MCF 10A (cell line): ENCODE measurements at regions of chr1 and their contacts with region 1.

Region 1: DNA sequence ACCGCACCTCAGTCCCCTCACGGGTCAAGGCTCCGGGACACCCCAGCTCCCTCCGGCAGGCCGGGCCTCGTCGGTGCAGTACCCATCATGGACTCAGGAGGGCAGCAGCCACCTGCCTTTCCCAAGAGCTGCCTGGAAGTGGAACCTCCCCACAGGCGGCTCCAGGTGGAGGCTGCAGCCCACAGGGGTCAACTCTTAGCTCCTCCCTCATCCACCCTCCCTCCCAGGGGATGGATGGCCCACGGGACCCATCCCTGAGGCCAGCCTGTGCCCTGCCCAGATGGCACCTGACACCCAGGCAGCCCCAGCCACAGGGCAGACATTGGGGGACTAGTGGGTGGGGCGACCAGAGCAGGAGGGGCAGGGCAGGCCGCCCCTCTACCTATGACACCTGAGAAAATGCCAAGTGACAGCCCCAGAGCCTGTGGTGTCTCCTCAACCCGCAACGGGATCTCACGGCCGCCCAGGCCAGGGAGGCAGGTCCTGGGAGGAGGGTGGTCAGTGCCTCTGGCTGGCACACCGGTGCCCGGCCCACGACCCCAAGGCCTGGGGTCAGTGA is 1.2 kb upstream of the ARHGEF16 start:
- DNase-seq: peak; percentile 78
- H3K4me3 Mint-ChIP-seq: peak overlapping the region; percentile 76
- H3K27ac Mint-ChIP-seq: no peak overlapping the region
- H3K4me1 Mint-ChIP-seq: no peaks in the 10 kb centered on the region
- H3K27me3 Mint-ChIP-seq: peaks cover 19% of the 10 kb centered on the region
- CTCF ChIP-seq: peak; percentile 97

Region 2: DNA sequence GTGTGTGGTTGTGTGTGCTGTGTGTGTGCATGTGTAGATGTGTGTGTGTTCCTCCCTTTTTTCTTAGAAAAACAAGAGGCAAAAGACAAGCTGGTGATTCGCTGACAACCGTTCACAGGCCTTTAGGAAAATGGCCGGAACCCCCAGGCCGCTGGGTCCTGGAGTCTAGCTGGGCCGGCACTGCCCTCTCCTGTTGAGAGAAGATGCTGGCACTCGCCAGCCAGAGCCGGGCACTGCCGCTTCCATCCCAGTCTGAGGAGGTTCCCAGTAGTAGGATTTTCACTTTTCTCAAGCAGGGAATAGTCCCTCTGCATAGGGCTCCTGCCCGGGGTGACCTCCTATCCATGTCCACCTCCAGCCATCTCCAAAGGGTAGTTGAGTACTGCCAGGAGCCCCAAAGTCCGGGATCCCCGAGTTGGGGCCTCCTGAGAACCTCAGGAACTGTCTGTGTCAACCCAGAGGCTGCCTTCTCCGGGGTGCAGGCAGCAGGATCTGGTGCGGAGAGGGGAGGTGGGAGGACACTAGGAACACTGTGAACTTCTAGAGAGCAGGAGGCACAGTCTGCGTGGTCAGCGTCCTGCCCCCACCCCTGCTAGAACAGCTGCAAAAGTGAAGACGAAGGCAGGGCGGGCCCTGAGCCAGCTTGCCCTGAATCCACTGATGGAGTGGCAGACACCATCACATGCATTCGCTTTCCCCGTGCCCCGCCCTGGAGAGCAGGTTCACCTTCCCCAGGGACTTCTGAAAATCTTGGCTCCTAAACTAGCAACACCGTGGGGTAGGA is 42.9 kb before region 1 on chr1:
- CTCF ChIA-PET with region 1: no interaction called
- POLR2A ChIA-PET with region 1: no interaction called
- intact Hi-C with region 1: no loop called
- DNase-seq: peak; percentile 56
- H3K4me3 Mint-ChIP-seq: no peak overlapping the region
- H3K27ac Mint-ChIP-seq: no peak overlapping the region
- H3K4me1 Mint-ChIP-seq: no peaks in the 10 kb centered on the region
- H3K27me3 Mint-ChIP-seq: peaks cover 23% of the 10 kb centered on the region
- CTCF ChIP-seq: peak; percentile 48

Region 3: DNA sequence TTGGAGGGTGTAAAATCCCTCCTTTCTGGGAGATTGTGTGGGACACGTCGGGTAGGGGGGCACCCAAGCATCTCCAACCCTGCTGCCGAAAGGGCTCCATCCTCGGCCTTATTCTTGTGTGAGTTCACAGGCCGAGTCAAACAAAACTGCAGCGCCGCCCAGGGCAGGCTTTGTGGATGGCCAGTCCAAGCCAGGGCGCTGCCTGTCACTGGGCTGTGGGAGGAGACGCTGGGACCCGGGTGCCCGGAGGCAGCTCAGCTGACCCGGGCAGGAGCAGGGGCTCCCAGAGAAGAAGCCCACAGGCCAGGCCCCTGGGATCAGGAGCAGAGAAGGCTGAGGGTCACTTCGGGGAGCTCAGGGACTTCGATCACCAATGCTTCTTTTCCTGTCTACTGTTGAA is 30.6 kb before region 1 on chr1:
- CTCF ChIA-PET with region 1: no interaction called
- POLR2A ChIA-PET with region 1: no interaction called
- intact Hi-C with region 1: no loop called
- DNase-seq: no peak
- H3K4me3 Mint-ChIP-seq: no peak overlapping the region
- H3K27ac Mint-ChIP-seq: no peak overlapping the region
- H3K4me1 Mint-ChIP-seq: no peaks in the 10 kb centered on the region
- H3K27me3 Mint-ChIP-seq: peaks cover 32% of the 10 kb centered on the region
- CTCF ChIP-seq: no peak

Region 4: DNA sequence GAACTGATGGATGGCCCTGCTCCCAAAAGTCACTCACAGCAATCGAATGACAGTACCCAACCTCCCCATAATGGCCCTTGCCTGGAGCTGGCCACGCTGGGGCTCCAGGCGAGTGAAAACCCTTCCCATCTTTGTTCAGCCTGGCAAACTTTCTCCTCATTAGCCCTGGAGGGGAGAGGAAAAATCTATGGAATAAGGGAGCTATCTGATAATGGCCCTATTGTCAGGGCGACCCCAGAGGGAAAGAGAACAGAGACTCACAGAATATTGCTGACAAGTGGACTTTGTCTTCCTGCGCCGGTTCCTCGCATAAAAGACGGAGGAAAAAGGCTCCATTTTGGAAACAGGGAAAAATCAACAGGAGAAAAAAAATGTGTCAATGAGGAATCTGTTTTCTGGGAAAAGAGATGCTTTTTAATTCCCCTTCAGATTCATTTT is 11.9 kb before region 1 on chr1:
- CTCF ChIA-PET with region 1: interaction called, 27 read pairs
- POLR2A ChIA-PET with region 1: no interaction called
- intact Hi-C with region 1: no loop called
- DNase-seq: no peak
- H3K4me3 Mint-ChIP-seq: no peak overlapping the region
- H3K27ac Mint-ChIP-seq: no peak overlapping the region
- H3K4me1 Mint-ChIP-seq: no peaks in the 10 kb centered on the region
- H3K27me3 Mint-ChIP-seq: peaks cover 40% of the 10 kb centered on the region
- CTCF ChIP-seq: no peak

Region 5: DNA sequence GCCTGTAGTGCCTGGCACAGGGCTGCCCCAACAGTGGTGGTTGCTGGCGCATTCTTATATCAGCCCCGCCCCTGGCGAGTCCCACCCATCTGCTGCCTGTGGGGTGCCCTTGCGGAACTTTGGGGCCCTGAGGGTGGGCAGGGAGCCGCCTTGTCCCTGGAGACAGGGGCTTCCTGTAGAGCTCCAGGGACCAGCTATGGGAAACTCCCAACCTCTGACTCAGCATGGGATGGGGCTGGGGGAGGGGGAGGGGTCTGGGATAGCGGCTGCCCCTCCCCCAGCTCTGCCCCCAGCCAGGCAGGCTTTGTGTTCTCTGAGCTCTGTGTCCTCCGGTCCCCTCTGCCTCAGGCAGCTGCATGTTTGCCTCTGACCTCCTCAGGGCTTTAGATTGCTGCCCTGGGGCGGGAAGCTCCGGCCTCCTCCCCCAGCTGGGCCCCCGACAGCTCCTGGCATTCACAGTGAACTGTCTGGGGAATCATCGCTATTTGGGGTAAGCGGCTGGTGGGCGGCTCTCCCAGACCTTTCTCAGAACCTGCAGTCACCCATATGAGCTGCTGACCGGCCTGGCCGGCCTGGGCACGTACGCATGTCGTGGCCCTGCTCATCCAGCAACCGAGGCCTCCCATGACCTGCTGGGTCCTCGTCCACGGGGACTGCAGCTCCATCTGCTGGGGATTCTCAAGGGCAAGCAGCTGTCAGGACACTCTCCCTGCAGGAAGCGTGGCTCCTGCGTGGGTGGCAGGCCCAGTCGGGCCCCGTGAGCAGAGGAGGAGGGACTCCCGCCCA is 18.2 kb after region 1 on chr1:
- CTCF ChIA-PET with region 1: interaction called, 53 read pairs
- POLR2A ChIA-PET with region 1: interaction called, 15 read pairs
- intact Hi-C with region 1: loop called (anchors 1 kb)
- DNase-seq: peak; percentile 53
- H3K4me3 Mint-ChIP-seq: no peak overlapping the region
- H3K27ac Mint-ChIP-seq: no peak overlapping the region
- H3K4me1 Mint-ChIP-seq: peaks cover 22% of the 10 kb centered on the region
- H3K27me3 Mint-ChIP-seq: no peaks in the 10 kb centered on the region
- CTCF ChIP-seq: peak; percentile 29

Region 6: DNA sequence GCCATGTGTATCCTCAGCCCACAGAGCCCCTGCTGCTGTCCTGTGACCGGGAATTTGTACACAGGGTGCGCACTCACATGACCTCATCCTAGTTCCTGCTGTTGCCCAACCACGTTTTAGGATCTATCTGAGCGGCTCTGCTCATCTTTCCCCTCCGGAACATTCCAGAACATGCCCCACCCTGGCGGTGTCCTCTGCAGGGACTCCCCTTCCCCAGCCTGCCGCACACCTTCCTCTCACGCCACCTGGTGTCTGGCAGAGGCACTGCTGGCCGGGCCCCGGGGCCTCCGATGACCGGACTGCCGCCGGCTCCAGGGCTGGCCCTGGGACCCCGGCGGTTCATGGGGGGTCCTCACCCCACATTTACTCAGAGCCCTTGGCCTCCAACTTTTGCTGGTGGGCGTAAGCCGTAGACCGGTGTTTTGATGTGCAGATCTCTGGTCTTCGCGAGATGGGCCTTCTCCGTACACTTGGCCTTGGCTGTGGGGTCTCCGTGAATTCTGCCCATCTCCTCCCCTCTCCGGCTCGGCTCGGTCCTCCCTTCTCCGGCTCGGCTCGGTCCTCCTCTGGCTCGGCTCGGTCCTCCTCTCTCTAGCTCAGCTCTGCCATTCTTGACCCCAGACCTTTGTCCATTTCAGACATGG is 30.6 kb after region 1 on chr1:
- CTCF ChIA-PET with region 1: interaction called, 198 read pairs
- POLR2A ChIA-PET with region 1: interaction called, 20 read pairs
- intact Hi-C with region 1: loop called (anchors 1 kb)
- DNase-seq: peak; percentile 72
- H3K4me3 Mint-ChIP-seq: peak overlapping the region; percentile 33
- H3K27ac Mint-ChIP-seq: peak overlapping the region; percentile 79
- H3K4me1 Mint-ChIP-seq: peaks cover 10% of the 10 kb centered on the region
- H3K27me3 Mint-ChIP-seq: no peaks in the 10 kb centered on the region
- CTCF ChIP-seq: peak; percentile 97

Region 7: GRCh38 chr1:3491291-3492246 is 38.3 kb after region 1 on chr1:
- CTCF ChIA-PET with region 1: interaction called, 198 read pairs
- POLR2A ChIA-PET with region 1: interaction called, 20 read pairs
- intact Hi-C with region 1: no loop called
- DNase-seq: peak; percentile 66
- H3K4me3 Mint-ChIP-seq: no peak overlapping the region
- H3K27ac Mint-ChIP-seq: no peak overlapping the region
- H3K4me1 Mint-ChIP-seq: no peaks in the 10 kb centered on the region
- H3K27me3 Mint-ChIP-seq: no peaks in the 10 kb centered on the region
- CTCF ChIP-seq: peak; percentile 99